ENCODE measurements at regions of chr4 and their contacts with region 1.

Region 1: DNA sequence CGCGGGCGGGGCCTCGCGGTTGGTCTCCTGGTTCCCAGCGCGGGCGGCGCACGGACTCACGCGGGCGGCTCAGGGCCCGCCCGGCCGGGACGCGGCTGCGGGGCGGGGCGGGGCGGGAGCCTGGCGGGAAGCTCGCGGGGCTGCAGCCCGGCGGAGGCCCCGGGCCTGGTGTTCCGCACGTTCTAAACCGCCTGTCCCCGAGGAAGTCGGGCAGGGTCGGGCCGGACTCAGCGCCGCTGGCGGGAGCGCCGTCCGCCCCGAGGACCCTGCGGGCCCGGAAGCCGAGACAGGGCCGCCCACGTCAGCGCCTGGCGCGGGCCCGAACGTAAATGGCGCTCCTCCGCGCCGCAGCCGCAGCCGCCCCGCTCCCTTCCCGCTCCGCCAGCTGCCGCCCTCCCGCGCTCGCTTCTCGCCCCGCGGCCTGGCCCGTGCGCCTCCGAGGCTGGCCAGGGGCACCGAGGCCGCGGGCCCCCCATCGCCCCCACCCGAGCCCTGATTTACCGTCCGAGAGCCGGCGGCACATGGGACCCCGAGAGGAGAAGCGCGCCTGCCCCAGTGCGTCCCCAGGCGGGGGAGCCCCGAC is 309 bp upstream of the CTBP1 start:
- DNase-seq: peak; percentile 79
- ATAC-seq: peak; percentile 51
- H3K4me3 Mint-ChIP-seq: peak overlapping the region; percentile 86
- H3K27ac Mint-ChIP-seq: peak overlapping the region; percentile 91
- H3K4me1 Mint-ChIP-seq: peaks cover 69% of the 10 kb centered on the region
- H3K27me3 Mint-ChIP-seq: no peaks in the 10 kb centered on the region
- CTCF ChIP-seq: no peak

Region 2: DNA sequence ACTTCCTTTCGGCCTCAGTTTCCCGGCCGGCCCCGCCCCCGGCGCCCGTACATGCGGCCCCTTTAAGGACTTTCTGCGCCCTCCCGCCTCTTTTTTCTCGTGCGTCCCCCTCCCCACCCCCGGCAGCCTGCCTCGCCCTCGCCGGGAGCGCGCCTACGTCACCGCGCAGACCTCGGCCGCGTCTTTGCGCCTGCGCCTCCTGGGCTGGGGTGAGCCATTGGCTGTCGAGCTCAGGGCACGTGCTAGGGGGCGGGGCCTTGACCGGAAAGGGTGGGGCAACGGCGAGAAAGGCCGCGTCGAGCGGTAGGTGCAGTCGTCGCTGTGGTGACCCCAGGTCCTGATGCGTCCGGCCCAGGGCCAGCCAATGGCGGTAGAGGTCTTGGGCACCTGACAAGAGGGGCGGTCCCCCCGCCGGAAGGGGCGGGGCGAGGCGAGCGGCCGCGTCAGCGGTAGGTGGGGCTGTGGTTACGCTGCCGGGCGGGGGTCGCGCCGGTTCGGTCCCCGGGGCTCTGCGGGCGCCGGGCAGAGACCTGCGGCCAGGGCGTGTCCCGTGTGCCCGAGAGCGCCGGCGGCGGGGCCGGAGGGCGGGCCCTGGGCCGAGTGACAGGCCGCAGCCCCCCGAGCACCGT is 97.7 kb after region 1 on chr4 and contains the start of gene UVSSA:
- CTCF ChIA-PET with region 1: interaction called, 4 read pairs
- POLR2A ChIA-PET with region 1: interaction called, 5 read pairs
- intact Hi-C with region 1: loop called (anchors 2 kb)
- DNase-seq: peak; percentile 100
- ATAC-seq: peak; percentile 96
- H3K4me3 Mint-ChIP-seq: peak within 1 kb of the TSS; percentile 84
- H3K27ac Mint-ChIP-seq: peak within 1 kb of the TSS; percentile 90
- H3K4me1 Mint-ChIP-seq: peaks cover 43% of the 10 kb centered on the region
- H3K27me3 Mint-ChIP-seq: no peaks in the 10 kb centered on the region
- CTCF ChIP-seq: no peak
- total RNA-seq, gene UVSSA: 18.6 to 20.2 TPM

Measured in activated CD8-positive, alpha-beta T cell treated with anti-CD3 and anti-CD28 coated beads for 36 hours (primary cell).